Psoas muscle (tissue), 8 donors: ENCODE measurements at regions of chr11 and their contacts with region 1.

Region 1: DNA sequence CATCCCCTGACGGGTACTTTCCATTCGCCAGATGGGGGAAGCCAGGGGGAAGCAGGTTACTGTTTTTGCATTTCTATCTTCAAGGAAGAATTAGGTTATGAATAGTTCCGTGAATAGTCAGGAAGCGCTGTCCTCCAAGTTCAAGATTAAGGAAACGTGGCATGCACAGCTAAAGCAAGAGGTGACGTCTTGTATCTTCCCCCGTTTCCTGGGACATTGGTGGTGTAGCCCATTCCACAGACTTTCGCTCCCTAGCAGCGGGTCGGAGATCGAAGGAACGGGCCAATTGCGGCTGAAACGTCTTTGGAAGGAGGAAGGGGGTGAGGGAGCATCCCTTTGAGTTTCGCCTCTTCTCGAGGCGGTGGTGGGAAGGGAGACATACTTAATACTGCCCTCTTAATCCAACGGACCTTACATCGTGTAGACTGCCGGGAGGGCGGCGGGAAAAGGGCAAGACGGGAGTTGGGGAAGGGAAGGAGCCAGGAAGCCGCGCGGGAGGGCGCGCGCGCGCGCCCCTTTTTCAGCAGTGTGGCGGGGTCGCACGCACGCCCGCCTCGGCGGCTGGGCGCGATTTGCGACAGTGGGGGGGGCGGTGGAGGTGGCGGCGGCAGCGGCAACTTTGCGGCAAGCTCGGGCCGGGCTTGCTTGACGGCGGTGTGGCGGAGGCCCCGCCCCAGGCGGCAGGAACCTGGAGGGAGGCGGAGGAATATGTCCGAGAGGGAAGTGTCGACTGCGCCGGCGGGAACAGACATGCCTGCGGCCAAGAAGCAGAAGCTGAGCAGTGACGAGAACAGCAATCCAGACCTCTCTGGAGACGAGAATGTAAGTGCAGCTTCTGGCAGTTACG is at the start of gene EED:
- DNase-seq: peak; percentile 97 to 98
- ATAC-seq: peak; percentile 93 to 96 (median 96)
- H3K4me3 ChIP-seq: peak within 1 kb of the TSS; percentile 86
- H3K27ac ChIP-seq: peak within 1 kb of the TSS; percentile 98
- H3K4me1 ChIP-seq: peaks cover 29% of the 10 kb centered on the region
- H3K27me3 ChIP-seq: no peaks in the 10 kb centered on the region
- CTCF ChIP-seq: no peak
- total RNA-seq, gene EED: 9.6 to 11.6 (median 10.7) TPM

Region 2: DNA sequence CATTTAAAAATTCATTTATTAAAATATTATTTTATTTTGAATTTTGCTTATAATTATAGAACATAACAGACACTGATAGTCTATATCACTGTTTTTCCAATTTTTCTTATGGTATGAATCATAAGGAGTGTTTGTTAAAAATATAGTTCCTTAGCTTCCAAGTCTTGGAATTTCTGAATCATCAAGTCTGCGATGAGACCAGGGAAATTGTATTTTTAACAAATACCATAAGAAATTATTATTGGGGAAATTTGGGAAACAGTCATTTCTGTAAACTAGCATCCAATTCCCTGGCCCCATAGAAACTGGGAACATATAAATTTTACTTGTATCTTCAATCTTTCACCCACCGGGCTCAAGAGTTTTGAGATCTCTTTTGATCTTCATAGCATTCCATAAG is 137.8 kb before region 1 on chr11:
- intact Hi-C with region 1: no loop called
- DNase-seq: no peak
- ATAC-seq: no peak
- H3K4me3 ChIP-seq: no peak overlapping the region
- H3K27ac ChIP-seq: no peak overlapping the region
- H3K4me1 ChIP-seq: no peaks in the 10 kb centered on the region
- H3K27me3 ChIP-seq: no peaks in the 10 kb centered on the region
- CTCF ChIP-seq: no peak

Region 3: DNA sequence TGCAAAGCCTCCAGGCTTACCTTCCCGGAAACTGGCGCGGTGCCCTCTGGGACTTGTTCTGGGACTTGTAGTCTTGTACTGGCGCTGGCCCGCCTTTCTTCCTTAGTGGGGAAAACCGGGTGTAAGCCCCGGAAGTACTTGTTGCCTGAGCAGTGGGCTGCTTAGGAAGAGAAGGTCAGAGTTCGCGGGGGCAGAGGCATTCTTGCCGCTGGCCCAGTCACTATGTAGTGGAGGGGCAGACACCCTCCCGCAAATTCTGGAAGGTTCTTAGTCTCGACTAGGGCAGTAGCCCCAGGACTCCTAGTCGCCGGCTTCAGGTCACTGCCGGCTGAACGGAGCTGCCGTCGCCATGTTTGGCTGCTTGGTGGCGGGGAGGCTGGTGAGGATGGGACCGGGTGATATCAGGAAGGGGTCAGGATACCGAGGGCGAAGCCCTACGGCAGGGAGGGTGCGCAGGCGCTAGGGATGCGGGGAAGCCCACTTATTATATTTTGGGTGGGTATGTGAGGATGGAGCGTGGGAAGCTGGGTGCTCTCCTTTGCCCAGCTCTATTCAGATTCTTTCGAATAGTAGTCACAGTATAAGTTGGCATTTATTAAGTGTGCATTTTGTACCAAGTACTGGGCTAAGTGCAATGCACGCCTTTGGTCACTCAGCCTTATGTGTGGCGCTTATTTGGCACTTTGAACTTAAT is 57.5 kb after region 1 on chr11 and contains the start of gene HIKESHI:
- intact Hi-C with region 1: loop called in 1 of 2 experiments (anchors 5 kb)
- DNase-seq: peak; percentile 100
- ATAC-seq: peak; percentile 97 to 99 (median 98)
- H3K4me3 ChIP-seq: peak within 1 kb of the TSS; percentile 89
- H3K27ac ChIP-seq: peak within 1 kb of the TSS; percentile 93
- H3K4me1 ChIP-seq: peaks cover 18% of the 10 kb centered on the region
- H3K27me3 ChIP-seq: no peaks in the 10 kb centered on the region
- CTCF ChIP-seq: no peak
- total RNA-seq, gene HIKESHI: 39.6 to 45.7 (median 41.4) TPM

Region 4: DNA sequence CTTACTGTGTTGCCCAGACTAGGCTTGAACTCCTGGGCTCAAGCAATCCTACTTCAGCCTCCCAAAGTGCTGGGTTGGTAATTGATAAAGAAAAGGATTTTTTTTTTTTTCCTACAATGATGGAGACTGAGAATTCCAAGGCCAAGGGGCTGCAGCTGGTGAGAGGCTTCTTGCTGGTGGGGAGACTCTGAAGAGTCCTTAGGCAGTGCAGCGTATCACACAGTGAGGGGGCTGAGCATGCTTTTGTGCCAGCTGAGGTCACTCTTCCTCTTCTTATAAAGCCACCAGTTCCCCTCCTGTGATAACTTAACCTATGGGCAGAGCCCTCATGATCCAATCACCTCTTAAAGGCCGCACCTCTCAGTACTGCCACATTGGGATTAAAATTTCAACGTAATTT is 101.8 kb after region 1 on chr11:
- intact Hi-C with region 1: no loop called
- DNase-seq: no peak
- ATAC-seq: no peak
- H3K4me3 ChIP-seq: no peak overlapping the region
- H3K27ac ChIP-seq: no peak overlapping the region
- H3K4me1 ChIP-seq: no peaks in the 10 kb centered on the region
- H3K27me3 ChIP-seq: no peaks in the 10 kb centered on the region
- CTCF ChIP-seq: no peak

Region 5: DNA sequence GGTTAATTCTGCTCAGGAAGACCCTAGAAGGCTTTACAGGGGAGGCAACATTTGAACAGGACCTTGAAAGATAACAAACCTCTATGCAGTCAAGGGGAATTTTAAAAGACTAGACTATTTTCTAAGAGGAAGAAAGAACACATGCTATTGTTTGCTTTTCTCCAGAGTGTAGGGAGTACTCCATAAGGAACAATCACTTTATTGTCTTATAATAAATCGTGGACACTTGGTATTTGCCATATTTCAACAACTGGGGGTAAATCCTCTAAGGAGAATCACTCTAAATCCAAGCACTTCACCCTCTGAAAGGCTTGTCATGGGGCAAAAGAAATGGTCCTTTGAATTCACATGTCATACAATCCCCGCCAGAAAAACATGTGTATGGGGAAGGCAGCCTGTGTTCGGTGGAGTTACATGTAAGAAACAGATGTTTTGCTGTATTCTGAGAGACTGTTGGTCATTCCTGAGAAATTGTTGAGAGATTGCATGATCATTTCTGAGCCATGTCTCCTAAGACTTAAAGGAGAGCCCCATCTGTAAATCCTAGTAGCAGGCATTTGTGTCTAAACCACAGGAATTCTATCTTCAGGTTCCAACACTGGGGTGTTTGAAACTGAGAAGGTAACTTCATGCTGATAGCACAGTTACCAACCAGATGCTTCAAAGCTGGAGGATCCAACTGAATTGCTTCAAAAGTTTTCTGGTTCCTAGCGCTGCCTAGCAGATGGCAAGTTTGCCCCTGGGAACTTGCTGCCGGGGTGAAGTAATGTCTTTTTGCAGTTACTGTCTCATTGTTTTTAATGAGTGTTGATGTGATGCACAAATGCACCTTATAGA is 643.6 kb after region 1 on chr11:
- intact Hi-C with region 1: no loop called
- DNase-seq: no peak
- ATAC-seq: no peak
- H3K4me3 ChIP-seq: no peak overlapping the region
- H3K27ac ChIP-seq: no peak overlapping the region
- H3K4me1 ChIP-seq: no peaks in the 10 kb centered on the region
- H3K27me3 ChIP-seq: no peaks in the 10 kb centered on the region
- CTCF ChIP-seq: no peak